Transverse colon (tissue), 4 donors: ENCODE measurements at regions of chr1 and their contacts with region 1.

Region 1: DNA sequence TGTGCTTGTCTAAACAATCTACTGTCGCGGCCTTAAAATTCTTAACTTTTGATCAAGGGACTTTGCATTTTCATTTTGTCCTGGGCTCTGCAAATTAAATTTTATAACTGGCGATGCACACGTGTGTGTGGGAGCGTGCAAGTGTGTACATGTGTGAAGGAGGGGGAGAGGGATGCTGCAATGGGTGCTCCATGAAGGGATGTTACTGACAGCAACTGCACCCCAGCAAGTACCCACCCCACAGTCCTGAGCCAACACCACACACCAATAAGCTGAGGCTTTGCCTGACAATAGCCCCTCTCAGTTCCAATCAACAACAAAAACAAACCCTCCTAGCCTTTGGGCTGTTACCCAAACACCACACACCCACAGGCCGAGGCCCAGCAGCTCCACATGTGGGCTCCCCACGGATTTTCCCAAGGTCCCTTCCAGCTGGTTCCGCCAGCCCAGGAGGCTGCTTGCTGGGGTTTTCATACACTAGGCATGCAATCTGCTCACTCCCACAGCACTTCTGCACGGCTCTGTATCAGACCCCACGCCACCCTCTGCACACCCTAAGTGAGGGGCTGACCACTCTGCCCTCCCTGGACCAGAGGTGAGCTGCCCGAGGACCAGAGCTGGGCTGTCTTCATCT is 32.8 kb upstream of the IFFO2 start:
- DNase-seq: no peak
- H3K4me3 ChIP-seq: no peak overlapping the region
- H3K27ac ChIP-seq: no peak overlapping the region
- H3K4me1 ChIP-seq: no peaks in the 10 kb centered on the region
- H3K27me3 ChIP-seq: no peaks in the 10 kb centered on the region
- CTCF ChIP-seq: no peak
- EP300 ChIP-seq: no peak
- POLR2A ChIP-seq: no peak

Region 2: GRCh38 chr1:18309552-18310155 is 679.6 kb before region 1 on chr1:
- in situ Hi-C with region 1: no loop called
- intact Hi-C with region 1: no loop called
- DNase-seq: no peak
- H3K4me3 ChIP-seq: no peak overlapping the region
- H3K27ac ChIP-seq: no peak overlapping the region
- H3K4me1 ChIP-seq: no peaks in the 10 kb centered on the region
- H3K27me3 ChIP-seq: no peaks in the 10 kb centered on the region
- CTCF ChIP-seq: no peak
- EP300 ChIP-seq: no peak
- POLR2A ChIP-seq: no peak

Region 3: DNA sequence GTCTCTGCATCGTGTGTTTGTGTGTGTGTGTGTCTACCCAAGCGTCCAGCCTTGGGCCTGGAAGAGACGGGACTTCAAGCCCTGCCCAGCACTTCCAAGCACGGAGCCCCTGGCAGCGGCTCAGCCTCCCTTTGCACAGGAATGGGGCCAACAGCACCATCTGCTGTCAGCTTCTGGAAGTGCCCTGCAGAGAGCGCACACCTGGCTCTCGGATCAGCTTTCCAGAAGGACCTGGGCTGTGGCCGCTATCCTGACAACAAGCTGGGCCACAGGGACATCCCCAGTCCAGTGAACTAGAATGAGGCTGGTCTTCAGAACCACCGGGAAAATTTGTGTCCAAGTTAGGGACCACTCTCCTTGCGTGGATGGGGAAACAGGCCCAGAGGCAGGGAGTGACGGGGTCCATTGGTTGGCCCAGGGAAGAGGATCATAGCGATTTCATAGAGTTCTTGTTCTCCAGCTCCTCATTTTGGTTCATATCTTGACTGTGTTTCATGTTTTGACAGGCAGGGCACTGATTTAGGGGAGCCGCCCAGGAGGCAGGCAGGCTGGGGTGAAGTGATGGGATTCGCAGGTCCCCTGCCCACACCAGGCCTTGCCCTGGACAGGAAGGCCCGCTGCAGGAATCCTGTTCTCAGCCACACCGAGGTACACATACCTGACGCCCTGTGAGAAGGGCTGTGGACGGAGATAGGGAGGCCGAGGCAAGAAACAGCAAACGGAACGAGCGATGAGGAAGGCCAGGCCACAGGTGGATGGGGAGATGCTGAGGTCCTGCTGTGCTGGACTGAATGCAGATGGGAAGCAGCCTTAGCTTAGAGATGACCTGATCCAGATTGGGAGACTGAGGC is 168.3 kb before region 1 on chr1:
- in situ Hi-C with region 1: no loop called
- intact Hi-C with region 1: no loop called
- DNase-seq: peak; percentile 68
- H3K4me3 ChIP-seq: no peak overlapping the region
- H3K27ac ChIP-seq: no peak overlapping the region
- H3K4me1 ChIP-seq: no peaks in the 10 kb centered on the region
- H3K27me3 ChIP-seq: peaks cover 35% of the 10 kb centered on the region
- CTCF ChIP-seq: peak; percentile 79 to 94 (median 86)
- EP300 ChIP-seq: no peak
- POLR2A ChIP-seq: no peak

Region 4: GRCh38 chr1:18956369-18957135 is 32.7 kb before region 1 on chr1 and contains the start of gene IFFO2:
- in situ Hi-C with region 1: no loop called
- intact Hi-C with region 1: no loop called
- DNase-seq: peak; percentile 99
- H3K4me3 ChIP-seq: peak within 1 kb of the TSS; percentile 62 to 91 (median 82)
- H3K27ac ChIP-seq: peak within 1 kb of the TSS; percentile 82 to 91 (median 88)
- H3K4me1 ChIP-seq: peaks cover 3 to 45% (median 27%) of the 10 kb centered on the region in 4 donors
- H3K27me3 ChIP-seq: no peaks in the 10 kb centered on the region
- CTCF ChIP-seq: no peak
- EP300 ChIP-seq: no peak
- POLR2A ChIP-seq: peak; percentile 70
- total RNA-seq, gene IFFO2: 5.0 to 145 (median 13.6) TPM

Region 5: DNA sequence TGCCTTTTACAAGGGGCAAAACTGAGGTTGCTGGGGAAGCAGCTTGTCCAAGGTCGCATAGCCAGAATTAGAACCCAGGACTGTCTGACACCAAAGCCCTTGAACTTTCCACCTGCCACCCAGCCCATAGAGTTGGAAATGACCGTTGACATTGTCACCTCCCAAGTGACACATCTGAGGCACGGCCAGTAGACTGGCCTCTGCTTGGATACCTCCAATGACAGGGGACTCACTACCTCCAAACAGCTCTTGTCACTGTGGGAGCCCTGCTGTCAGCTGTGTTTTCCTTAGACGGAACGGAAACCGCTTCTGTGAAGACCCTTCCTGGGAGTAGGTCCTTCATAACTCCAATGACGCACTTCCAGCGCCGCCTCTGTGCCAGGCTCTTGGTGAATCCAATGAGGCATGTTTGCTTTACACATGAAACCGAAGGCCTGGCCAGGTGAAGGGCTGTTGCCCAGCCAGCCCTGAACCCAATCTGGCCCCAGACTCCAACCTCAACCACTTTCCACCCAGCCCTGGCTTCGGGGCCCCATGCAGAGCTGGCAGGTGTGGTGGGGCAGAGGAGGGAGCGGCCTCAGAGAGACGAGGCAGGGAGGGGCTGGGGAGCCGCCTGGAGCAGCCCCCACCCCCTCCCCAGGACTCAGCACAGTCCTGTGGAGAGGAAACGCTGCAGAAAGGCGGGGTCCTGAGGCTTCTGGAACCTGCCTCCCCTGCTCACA is 76.4 kb after region 1 on chr1:
- in situ Hi-C with region 1: no loop called
- intact Hi-C with region 1: loop called (anchors 2 kb)
- DNase-seq: no peak
- H3K4me3 ChIP-seq: no peak overlapping the region
- H3K27ac ChIP-seq: peak overlapping the region in 3 of 4 donors; percentile 12 to 49 (median 30)
- H3K4me1 ChIP-seq: peaks cover 5 to 40% (median 27%) of the 10 kb centered on the region in 4 donors
- H3K27me3 ChIP-seq: no peaks in the 10 kb centered on the region
- CTCF ChIP-seq: no peak
- EP300 ChIP-seq: no peak
- POLR2A ChIP-seq: no peak